ENCODE measurements at regions of chr11 and their contacts with region 1.

Region 1: GRCh38 chr11:128810784-128811514 is 56.1 kb downstream of the KCNJ1 start:
- DNase-seq: no peak
- ATAC-seq: no peak
- H3K4me3 ChIP-seq: no peak overlapping the region
- H3K27ac ChIP-seq: no peak overlapping the region
- H3K4me1 ChIP-seq: no peaks in the 10 kb centered on the region
- H3K27me3 ChIP-seq: no peaks in the 10 kb centered on the region
- CTCF ChIP-seq: no peak
- EP300 ChIP-seq: no peak
- POLR2A ChIP-seq: no peak
- RAD21 ChIP-seq: no peak

Region 2: DNA sequence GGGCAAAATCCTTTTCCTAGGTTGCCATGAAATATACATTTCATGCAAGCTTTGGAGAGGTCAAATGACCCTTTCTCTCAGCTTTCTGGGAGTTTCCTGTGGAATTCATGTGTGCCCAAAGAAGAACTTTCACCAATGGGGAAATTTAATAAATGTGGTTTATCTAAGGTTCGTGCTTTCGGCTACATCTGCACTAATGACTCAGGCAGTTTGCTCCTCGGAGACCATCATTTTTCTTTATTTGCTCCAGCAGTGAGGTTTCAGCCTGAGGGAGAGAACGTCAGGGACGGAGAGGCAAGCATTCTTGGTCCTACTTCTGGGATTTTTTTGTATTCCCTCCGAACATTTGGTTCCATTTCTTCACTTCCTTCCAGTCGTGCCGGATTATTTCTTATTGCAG is 31.9 kb before region 1 on chr11:
- CTCF ChIA-PET with region 1: no interaction called
- POLR2A ChIA-PET with region 1: no interaction called
- RAD21 ChIA-PET with region 1: no interaction called
- SMC1A ChIA-PET with region 1: no interaction called
- in situ Hi-C with region 1: no loop called
- intact Hi-C with region 1: no loop called
- DNase-seq: no peak
- ATAC-seq: no peak
- H3K4me3 ChIP-seq: no peak overlapping the region
- H3K27ac ChIP-seq: no peak overlapping the region
- H3K4me1 ChIP-seq: no peaks in the 10 kb centered on the region
- H3K27me3 ChIP-seq: no peaks in the 10 kb centered on the region
- CTCF ChIP-seq: no peak
- EP300 ChIP-seq: no peak
- POLR2A ChIP-seq: no peak
- RAD21 ChIP-seq: no peak

Region 3: DNA sequence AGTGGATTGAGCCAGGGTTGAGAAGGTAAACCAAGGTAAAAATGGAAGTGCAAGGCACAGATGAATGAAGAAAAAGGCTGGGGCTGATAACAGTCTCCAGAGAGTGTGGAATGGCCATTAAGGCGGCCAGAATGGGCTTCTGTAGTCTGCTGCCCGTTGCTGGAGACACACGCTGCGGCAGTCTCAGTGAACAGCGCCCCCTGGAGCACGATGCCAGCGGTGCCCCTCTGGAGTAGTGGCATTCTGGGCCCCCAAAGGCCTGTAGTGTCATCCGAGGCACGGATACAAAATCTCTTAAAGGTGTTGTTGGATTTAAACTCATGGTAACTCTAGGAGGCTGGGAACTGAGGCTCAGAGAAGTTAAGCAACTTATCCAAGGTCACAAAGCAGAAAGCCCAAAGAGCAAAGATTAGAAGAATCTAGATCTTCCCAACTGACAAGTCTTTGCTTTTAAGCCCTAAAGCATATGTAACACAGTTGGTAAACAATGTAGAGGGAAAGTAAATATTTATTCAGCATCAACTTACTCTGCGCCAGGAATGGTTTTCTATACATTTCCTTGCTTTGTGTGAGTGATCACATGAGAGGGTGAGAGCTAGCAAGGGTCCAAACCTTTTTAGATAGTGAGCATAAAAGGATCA is 38.0 kb after region 1 on chr11:
- CTCF ChIA-PET with region 1: interaction called, 10 read pairs
- POLR2A ChIA-PET with region 1: no interaction called
- RAD21 ChIA-PET with region 1: no interaction called
- SMC1A ChIA-PET with region 1: no interaction called
- in situ Hi-C with region 1: no loop called
- intact Hi-C with region 1: no loop called
- DNase-seq: no peak
- ATAC-seq: peak; percentile 100
- H3K4me3 ChIP-seq: no peak overlapping the region
- H3K27ac ChIP-seq: no peak overlapping the region
- H3K4me1 ChIP-seq: peaks cover 4% of the 10 kb centered on the region; the same call in 1 of the 2 replicates
- H3K27me3 ChIP-seq: no peaks in the 10 kb centered on the region
- CTCF ChIP-seq: peak; percentile 81 to 91 (median 88)
- EP300 ChIP-seq: no peak
- POLR2A ChIP-seq: no peak
- RAD21 ChIP-seq: peak; percentile 68